Right ventricle myocardium superior (tissue), 1 donor: ENCODE measurements at regions of chr14 and their contacts with region 1.

Region 1: DNA sequence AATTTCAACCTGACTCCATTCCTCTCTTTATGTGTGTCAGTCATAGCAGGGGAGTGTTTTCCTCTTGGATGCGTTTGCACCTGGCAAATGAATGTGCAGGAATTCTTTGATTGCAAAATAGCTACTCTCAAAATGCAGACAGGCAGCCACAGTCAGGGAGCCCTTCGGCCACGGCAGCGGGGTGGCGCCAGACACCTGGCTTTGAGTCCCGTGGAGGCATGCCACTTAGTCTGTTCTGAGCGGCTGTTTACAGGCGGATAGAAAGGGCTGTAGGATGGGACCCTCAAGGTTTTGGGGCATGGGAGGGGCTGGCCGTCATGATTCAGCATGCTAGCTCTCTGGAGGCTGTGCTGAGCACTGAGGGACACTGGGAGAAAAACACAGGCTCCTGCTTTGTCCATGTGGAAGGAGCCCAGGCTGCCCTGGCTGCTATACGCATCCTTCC is 117.1 kb downstream of the SLC25A47 start:
- DNase-seq: peak; percentile 84
- ATAC-seq: peak; percentile 95

Region 2: DNA sequence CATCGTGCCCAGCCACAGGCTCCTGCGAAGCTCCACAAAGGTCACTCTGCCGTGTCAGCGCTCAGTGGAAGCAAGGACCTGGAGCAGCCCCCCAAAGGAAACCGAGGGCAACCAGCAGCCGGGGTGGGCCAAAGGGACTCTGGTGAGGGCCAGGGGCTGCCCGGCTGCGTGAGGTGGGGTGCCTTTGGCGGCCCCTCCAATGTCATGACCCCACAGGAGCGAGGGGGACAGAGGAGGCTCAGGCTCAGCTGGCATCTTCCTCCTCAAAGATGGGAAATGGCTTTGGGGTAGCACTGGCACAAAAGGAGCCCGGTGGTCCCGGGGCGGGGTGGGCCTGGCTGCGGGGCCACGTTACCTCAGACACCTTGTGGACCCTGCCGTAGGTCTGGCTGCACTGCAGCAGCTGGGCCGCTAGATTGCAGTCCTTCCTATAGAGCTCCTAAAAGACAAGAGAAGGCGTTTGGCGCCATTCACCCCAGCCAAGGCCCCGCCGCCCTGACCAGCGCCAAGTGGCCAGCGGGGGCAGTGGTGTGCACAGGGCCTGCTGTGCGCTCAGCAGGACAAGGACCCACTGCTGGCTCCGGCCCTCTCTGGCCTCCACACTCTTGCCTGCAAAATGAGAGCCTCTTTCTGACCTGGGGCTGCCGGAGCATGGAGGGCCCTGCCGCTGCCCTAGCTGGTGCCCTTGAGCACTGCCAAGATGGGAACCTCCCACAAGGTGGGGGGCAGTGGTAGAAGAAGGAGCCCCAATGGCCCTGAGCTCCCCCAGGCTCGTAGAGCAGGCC is 100.1 kb after region 1 on chr14:
- intact Hi-C with region 1: no loop called
- DNase-seq: peak; percentile 29
- ATAC-seq: no peak

Region 3: DNA sequence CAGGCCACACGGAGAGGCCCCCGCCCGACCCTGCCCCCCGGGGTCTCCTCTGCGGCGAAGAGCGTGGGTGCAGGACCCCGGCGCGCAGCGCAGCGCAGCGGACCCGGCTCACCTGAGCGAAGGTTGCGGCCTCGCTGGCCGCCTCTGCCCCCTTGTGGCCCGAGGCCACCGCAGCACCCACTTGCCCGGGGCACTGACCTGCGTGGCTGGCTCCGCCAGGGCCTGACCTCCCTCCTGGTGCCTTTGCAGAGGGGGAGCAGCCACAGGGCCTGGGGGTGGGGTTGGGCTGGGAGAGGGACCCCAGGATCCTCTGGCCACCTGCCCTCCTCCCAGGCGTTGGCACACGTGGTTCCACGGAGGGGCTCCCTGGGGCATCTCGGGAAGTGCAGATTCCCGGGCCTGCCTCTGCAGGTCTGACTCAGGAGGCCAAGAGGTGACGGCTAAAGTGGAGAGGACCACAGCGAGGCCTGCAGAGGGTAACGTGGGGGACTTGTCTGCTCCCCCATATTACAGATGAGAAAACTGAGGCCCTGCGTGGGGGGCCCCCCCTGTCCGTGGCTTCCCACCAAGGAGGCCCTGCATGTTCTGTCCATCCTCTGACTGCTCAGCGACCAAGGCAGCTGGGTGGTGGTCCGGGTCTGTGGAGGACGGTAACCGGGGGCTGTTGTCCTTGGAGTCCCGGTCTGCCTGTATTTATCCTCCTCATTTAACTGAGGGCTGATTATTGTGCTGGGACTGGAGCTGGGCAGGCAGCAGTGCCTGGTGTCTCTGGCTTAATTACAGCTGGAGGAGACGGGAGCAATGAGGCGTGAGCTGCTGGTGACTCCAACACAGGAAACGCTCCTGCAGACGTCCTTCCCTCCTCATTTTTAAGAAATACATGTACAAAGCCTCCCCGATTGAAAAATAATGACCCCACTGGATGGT is 214.9 kb after region 1 on chr14:
- intact Hi-C with region 1: loop called (anchors 5 kb)
- DNase-seq: no peak
- ATAC-seq: peak; percentile 69

Region 4: DNA sequence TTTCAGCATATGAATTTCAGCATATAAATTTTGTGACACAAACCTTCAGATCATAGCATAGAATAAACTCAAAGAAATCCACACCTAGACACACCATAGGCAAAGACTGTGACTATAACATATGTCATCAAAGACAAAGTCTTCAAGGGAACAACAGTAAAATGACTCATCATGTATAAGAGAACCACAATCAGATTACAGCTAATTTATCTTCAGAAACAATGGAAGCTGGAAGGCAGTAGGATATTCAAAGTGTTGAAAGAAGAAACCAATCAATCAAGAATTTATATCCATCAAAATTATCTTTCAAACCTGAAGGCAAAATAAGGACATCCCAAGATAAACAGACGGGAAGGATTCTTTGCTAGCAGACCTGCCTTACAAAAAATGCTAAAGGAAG is 315.4 kb after region 1 on chr14:
- intact Hi-C with region 1: no loop called
- DNase-seq: no peak
- ATAC-seq: no peak